Psoas muscle (tissue), 8 donors: ENCODE measurements at regions of chr5 and their contacts with region 1.

Region 1: GRCh38 chr5:93800988-93801811 is 59.8 kb upstream of the POU5F2 start:
- DNase-seq: peak in 1 of 2 donors; percentile 13
- ATAC-seq: peak in 3 of 4 donors; percentile 46 to 76 (median 48)
- H3K4me3 ChIP-seq: no peak overlapping the region
- H3K27ac ChIP-seq: no peak overlapping the region
- H3K4me1 ChIP-seq: peaks cover 4% of the 10 kb centered on the region
- H3K27me3 ChIP-seq: no peaks in the 10 kb centered on the region
- CTCF ChIP-seq: peak; percentile 75

Region 2: DNA sequence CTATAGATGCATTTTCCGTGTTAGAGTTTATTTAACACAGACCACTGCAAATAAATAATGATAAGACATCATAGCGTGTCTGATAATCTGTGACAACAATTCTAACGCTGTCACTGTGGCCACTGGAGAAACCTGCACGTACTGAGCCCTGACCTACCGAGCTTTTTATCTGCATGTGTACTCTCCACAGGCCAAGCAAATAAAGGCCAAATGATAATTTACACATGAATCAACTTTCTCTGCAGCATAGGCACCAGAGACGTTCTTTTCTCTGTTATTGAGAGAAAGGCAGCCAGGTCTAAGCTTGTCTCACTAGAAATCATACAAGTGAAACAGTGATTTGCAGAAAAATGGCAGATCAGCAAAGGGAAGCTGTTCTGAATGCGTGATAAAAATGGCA is 135.6 kb before region 1 on chr5:
- intact Hi-C with region 1: no loop called
- DNase-seq: no peak
- ATAC-seq: no peak
- H3K4me3 ChIP-seq: no peak overlapping the region
- H3K27ac ChIP-seq: no peak overlapping the region
- H3K4me1 ChIP-seq: no peaks in the 10 kb centered on the region
- H3K27me3 ChIP-seq: no peaks in the 10 kb centered on the region
- CTCF ChIP-seq: no peak

Region 3: GRCh38 chr5:93677344-93678021 is 123.7 kb before region 1 on chr5:
- intact Hi-C with region 1: no loop called
- DNase-seq: peak; percentile 20 to 64
- ATAC-seq: peak; percentile 73 to 89 (median 84)
- H3K4me3 ChIP-seq: no peak overlapping the region
- H3K27ac ChIP-seq: no peak overlapping the region
- H3K4me1 ChIP-seq: peaks cover 13% of the 10 kb centered on the region
- H3K27me3 ChIP-seq: no peaks in the 10 kb centered on the region
- CTCF ChIP-seq: no peak

Region 4: GRCh38 chr5:93886917-93887361 is 85.7 kb after region 1 on chr5:
- intact Hi-C with region 1: loop called in 1 of 2 experiments (anchors 5 kb)
- DNase-seq: no peak
- ATAC-seq: no peak
- H3K4me3 ChIP-seq: no peak overlapping the region
- H3K27ac ChIP-seq: no peak overlapping the region
- H3K4me1 ChIP-seq: peaks cover 19% of the 10 kb centered on the region
- H3K27me3 ChIP-seq: no peaks in the 10 kb centered on the region
- CTCF ChIP-seq: no peak

Region 5: GRCh38 chr5:93995126-93995621 is 194.0 kb after region 1 on chr5:
- intact Hi-C with region 1: no loop called
- DNase-seq: no peak
- ATAC-seq: no peak
- H3K4me3 ChIP-seq: no peak overlapping the region
- H3K27ac ChIP-seq: no peak overlapping the region
- H3K4me1 ChIP-seq: no peaks in the 10 kb centered on the region
- H3K27me3 ChIP-seq: no peaks in the 10 kb centered on the region
- CTCF ChIP-seq: no peak

Region 6: GRCh38 chr5:94072116-94072515 is 270.9 kb after region 1 on chr5:
- intact Hi-C with region 1: no loop called
- DNase-seq: no peak
- ATAC-seq: no peak
- H3K4me3 ChIP-seq: no peak overlapping the region
- H3K27ac ChIP-seq: no peak overlapping the region
- H3K4me1 ChIP-seq: no peaks in the 10 kb centered on the region
- H3K27me3 ChIP-seq: no peaks in the 10 kb centered on the region
- CTCF ChIP-seq: no peak